ENCODE measurements at regions of chr4 and their contacts with region 1.

Region 1: DNA sequence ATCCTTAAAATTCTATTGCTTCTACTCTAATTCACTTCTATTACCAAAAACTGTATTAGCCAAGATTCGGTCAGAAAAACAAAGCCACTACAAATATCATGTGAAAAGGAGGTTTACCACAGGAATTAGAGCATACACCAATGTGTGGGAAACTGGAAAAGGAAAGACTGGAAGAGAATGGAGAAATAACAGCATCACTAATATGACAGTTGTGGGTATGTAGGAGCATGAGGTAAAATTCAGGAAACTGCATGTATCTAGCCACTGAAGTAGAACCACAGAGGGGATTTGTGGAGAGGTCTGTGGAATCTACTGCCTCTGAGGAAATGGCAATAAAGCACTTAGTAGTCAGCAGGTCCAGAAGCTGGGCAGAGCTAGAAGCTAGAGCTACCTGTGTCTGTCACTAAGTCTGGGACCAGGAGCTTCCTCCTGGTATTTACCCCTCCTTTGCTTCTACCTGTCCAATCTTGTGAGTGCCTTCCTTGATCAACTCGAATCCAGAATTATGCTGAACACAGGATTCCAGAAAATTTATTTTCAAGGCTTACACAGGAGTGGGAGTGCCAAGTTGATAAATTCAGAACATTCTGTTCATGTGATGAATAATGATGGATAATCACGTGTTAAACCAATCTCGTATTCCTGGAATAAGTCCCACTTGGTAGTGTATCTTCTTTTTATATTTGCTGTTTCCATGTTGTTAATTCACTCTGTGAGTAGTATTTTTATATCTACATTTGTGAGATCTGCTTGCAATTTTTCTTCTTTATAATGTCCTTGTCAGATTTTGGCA is 52.6 kb downstream of the NAF1 start:
- DNase-seq: no peak
- H3K4me3 ChIP-seq: no peak overlapping the region
- H3K27ac ChIP-seq: no peak overlapping the region
- H3K4me1 ChIP-seq: no peaks in the 10 kb centered on the region
- H3K27me3 ChIP-seq: no peaks in the 10 kb centered on the region
- CTCF ChIP-seq: no peak

Region 2: DNA sequence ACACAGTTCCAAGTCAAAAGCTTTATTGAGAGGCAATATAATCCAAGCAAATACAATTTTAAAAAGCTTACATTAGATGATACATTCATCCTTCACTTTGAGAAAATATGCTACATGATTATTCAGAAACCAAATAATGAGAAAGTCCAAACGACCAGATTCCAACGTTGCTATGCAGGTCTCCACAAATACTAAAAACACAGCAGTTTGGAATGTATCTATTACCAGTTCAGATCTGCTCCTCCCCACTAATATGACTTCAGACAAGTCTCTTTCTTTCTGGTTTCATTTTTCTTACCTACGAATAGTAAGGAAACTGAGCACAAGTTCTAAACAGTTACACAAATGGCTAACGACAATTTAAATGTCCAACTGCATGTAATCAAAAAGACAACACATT is 43.0 kb after region 1 on chr4:
- CTCF ChIA-PET with region 1: no interaction called
- POLR2A ChIA-PET with region 1: interaction called, 11 read pairs
- intact Hi-C with region 1: no loop called
- DNase-seq: no peak
- H3K4me3 ChIP-seq: no peak overlapping the region
- H3K27ac ChIP-seq: no peak overlapping the region
- H3K4me1 ChIP-seq: no peaks in the 10 kb centered on the region
- H3K27me3 ChIP-seq: no peaks in the 10 kb centered on the region
- CTCF ChIP-seq: no peak

Measured in A673 (cell line).